Dorsolateral prefrontal cortex (tissue), 120 donors: ENCODE measurements at regions of chr6 and their contacts with region 1.

Region 1: GRCh38 chr6:157667211-157668008 is 155.6 kb upstream of the SNX9 start:
- DNase-seq: peak in 4 of 10 donors; percentile 45 to 75 (median 60)
- H3K4me3 ChIP-seq: no peak overlapping the region
- H3K27ac ChIP-seq: peak overlapping the region in 1 of 59 donors; percentile 4
- H3K27me3 ChIP-seq: no peaks in the 10 kb centered on the region
- CTCF ChIP-seq: peak; percentile 79 to 95 (median 89)

Region 2: DNA sequence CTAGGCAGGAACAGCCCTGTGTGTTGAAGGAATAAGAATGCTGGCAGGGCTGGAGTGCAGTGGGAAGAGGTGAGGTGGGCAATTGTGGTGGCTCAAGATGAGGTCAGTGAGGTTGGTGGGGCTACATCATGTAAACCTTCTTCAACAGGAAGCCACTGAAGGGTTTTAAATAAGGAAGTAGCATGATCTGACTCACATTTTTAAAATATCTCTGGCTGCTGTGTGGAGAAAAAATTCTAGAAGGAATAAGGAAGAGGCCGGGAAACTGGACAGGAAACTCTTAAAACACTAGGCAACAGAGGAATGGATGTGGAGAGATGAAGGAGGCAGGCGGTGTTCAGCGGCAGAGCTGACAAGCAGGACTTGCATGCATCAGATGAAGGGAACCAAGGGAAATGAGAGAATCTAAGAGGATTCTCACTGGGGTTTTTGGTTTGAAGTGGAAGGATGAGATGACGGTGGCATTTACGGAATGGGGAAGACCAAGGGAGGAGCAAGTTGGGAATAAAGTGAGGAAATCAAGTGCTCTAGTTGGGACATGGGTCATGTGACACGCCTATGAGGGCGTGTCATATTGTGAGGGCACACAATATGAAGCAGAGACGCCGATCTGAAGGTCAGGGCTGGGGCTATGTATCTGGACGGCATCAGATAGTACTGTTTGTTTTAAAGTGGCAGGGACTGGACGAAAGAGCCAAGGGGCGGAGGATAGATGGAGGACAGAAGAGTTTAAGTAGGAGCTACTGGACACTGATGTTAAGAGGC is 362.3 kb before region 1 on chr6:
- intact Hi-C with region 1: no loop called
- DNase-seq: no peak
- H3K4me3 ChIP-seq: peak overlapping the region in 4 of 59 donors; percentile 6 to 20 (median 16)
- H3K27ac ChIP-seq: peak overlapping the region in 8 of 59 donors; percentile 0 to 61 (median 22)
- H3K27me3 ChIP-seq: no peaks in the 10 kb centered on the region
- CTCF ChIP-seq: no peak

Region 3: DNA sequence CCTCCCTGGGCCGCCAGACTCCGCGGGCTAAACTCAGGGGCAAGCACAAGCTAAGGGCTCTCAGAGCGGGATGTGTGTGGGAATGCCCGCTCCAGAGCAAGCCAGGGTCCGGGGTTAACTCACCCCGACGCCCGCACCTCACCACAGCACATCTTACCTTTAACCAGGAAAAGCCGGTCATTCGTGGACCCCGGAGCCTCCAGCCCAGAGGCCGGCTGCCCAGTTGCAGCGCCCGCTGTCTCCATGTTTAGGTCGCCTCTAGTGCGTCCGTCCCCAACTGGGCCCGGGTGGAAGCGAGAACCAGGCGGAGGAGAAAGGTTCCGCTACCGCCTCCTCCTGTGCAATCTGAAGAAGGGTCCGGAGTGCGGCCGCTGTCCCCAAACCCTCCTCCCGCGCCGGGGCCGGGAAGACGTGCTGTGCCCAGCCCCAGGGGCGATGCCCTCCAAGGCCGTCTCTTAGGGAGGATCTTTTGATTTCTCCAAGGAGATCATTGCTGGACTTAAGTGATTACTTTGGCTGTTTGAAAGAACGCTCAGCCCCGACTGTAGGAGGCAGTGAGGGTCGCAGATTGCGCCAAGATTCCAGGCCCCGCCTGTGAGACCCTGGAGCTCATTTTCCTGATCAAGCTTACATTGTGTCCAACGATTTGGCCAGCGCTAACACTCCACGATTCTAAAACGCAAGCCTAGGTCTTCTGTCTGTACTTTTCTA is 344.0 kb before region 1 on chr6 and contains the start of gene TMEM242:
- intact Hi-C with region 1: loop called (anchors 2 to 5 kb)
- DNase-seq: peak; percentile 83 to 94 (median 90)
- H3K4me3 ChIP-seq: peak within 1 kb of the TSS; percentile 61 to 99 (median 90)
- H3K27ac ChIP-seq: peak within 1 kb of the TSS; percentile 73 to 99 (median 93)
- H3K27me3 ChIP-seq: no peaks in the 10 kb centered on the region
- CTCF ChIP-seq: peak in 50 of 56 donors; percentile 1 to 67 (median 48)
- total RNA-seq, gene TMEM242: 10.7 to 28.5 (median 20.7) TPM

Region 4: GRCh38 chr6:157379656-157380454 is 287.6 kb before region 1 on chr6:
- intact Hi-C with region 1: loop called (anchors 5 kb)
- DNase-seq: peak; percentile 80 to 96 (median 94)
- H3K4me3 ChIP-seq: peak overlapping the region; percentile 63 to 100 (median 95)
- H3K27ac ChIP-seq: peak overlapping the region; percentile 80 to 99 (median 97)
- H3K27me3 ChIP-seq: no peaks in the 10 kb centered on the region
- CTCF ChIP-seq: peak in 21 of 56 donors; percentile 6 to 33 (median 14)

Region 5: DNA sequence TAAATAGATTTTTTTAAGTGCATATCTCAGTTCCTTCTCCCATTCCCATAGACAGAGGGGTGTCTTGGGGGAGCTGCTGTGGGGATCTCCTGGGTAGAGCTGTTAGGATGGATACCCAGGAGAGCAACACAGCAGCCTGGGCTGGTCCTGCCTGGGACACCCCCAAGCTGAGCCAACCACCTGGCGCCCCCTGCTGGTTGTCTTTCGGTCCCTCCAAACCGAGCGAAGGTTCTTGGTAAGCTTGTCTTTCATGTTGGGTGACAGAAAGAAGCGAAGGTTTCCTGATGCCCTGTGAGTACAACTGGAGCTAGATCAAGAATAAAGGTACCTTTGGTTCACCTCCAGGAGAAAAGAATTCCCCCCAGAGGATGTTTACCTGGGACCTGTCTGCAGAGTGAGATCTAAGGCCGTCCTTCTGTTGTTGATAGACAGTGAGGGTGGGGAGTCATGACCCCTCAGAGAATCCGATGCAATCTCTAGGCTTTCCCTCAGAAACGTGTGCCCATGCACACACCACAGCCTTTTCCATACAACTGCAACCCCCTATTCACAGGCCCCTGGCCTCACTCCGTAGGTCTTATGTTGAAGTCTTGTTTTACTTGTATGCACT is 206.4 kb after region 1 on chr6:
- intact Hi-C with region 1: loop called in 1 of 2 experiments (anchors 10 kb)
- DNase-seq: peak; percentile 35 to 80 (median 70)
- H3K4me3 ChIP-seq: no peak overlapping the region
- H3K27ac ChIP-seq: peak overlapping the region in 16 of 59 donors; percentile 1 to 55 (median 26)
- H3K27me3 ChIP-seq: no peaks in the 10 kb centered on the region
- CTCF ChIP-seq: peak; percentile 45 to 88 (median 78)

Region 6: DNA sequence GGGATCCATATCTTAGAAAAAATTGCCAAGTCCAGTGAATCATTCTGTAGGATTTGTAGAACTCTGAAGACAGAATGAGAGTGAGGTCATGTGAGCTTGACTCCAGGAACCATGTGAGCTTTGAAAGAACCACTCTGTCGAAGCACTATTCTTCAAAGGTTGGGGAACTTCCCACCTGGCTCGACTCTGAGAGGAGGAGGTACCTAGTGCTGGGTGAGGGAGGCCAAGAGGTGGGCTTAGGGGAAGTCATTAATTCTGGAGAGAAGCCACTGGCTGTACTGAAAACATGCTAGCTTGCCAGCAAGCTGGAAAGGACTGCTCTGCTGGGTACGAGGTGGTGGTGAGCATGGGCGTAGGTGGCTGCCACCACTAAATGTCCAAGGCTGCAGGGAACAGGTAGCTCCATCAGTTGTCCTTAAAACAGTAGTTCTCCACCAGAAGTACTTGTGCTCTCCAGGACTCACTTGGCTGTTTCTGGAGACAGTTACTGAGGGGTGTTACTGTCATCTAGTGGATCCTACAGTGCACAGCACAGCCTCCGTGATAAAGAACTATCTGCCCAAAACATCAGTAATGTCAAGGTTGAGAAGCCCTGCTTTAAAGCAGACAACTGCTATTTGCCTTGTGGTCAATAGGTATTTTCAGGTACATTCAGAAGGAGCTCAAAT is 279.6 kb after region 1 on chr6:
- intact Hi-C with region 1: loop called in 1 of 2 experiments (anchors 5 kb)
- DNase-seq: peak in 1 of 10 donors; percentile 58
- H3K4me3 ChIP-seq: no peak overlapping the region
- H3K27ac ChIP-seq: peak overlapping the region in 48 of 59 donors; percentile 9 to 100 (median 61)
- H3K27me3 ChIP-seq: no peaks in the 10 kb centered on the region
- CTCF ChIP-seq: peak; percentile 22 to 88 (median 71)

Region 7: DNA sequence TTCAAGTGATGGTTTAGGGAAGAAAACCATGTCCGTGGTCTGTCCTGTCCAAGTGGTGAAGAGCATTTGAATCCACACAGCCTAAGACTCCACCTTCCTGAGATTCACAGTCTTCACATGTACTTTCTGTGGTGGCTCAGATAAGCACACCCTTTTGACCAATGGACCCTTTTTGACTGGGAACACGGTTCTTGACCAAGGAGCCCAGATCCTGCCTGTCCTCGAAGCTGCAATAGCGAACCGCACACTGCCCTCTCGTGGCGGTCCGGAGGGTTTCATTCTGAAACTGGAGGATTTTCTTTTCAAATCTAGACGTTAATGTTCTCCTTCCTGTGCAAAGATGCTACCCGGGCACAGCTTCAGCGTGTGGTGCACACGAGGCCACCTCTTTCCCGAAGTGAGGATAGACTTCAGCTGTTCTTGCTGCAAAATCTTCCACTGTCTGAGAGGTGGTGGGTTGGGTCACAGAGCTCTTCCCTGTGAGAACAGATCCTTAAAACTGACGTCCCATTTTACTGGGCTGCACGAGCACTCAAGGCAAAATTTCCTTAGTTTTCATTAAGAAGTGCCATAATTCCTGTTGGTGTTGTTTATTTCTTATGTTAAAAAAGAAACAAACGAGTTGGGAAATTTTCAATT is 404.8 kb after region 1 on chr6:
- intact Hi-C with region 1: loop called in 1 of 2 experiments (anchors 10 kb)
- DNase-seq: peak; percentile 70 to 91 (median 78)
- H3K4me3 ChIP-seq: peak overlapping the region in 1 of 59 donors; percentile 16
- H3K27ac ChIP-seq: peak overlapping the region in 58 of 59 donors; percentile 2 to 90 (median 80)
- H3K27me3 ChIP-seq: no peaks in the 10 kb centered on the region
- CTCF ChIP-seq: peak; percentile 69 to 97 (median 90)